Posterior cingulate gyrus (tissue), 11 donors: ENCODE measurements at regions of chr10 and their contacts with region 1.

Region 1: GRCh38 chr10:60816628-60817397 is 38.5 kb downstream of the CDK1 start:
- DNase-seq: peak in 4 of 10 donors; percentile 25 to 52 (median 40)

Region 2: DNA sequence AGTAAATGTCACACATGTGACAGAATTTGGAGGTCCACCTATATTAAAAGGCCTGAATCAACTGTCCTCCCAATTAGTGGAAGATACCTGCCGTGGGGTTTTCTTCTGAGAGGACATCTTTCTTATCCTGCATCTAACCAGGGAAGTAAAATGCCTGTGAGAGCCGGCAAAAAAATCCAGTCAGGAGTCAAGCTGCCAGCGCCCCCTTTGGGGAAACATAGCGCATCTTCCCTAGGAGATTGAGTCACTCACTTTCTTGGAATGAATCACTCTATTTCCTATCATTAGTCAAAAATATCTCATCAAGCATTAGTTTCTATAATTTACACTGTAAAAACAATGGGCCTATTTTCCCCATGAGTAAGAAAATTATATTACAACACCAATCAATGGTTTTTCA is 360.8 kb before region 1 on chr10:
- intact Hi-C with region 1: no loop called
- DNase-seq: no peak

Region 3: GRCh38 chr10:60964257-60965235 is 147.7 kb after region 1 on chr10:
- intact Hi-C with region 1: loop called (anchors 2 kb)
- DNase-seq: peak in 9 of 10 donors; percentile 53 to 93 (median 68)

Region 4: GRCh38 chr10:61733358-61733940 is 916.6 kb after region 1 on chr10:
- intact Hi-C with region 1: loop called (anchors 5 kb)
- DNase-seq: peak in 1 of 10 donors; percentile 14